ENCODE measurements at regions of chr1 and their contacts with region 1.

Region 1: GRCh38 chr1:224922404-224923164 is 6.9 kb upstream of the DNAH14 start:
- DNase-seq: no peak
- H3K4me3 ChIP-seq: no peak overlapping the region
- H3K27ac ChIP-seq: no peak overlapping the region
- H3K4me1 ChIP-seq: no peaks in the 10 kb centered on the region
- H3K27me3 ChIP-seq: no peaks in the 10 kb centered on the region
- CTCF ChIP-seq: peak in 3 of 4 experiments; percentile 57 to 73 (median 61)
- EP300 ChIP-seq: no peak
- POLR2A ChIP-seq: no peak

Region 2: DNA sequence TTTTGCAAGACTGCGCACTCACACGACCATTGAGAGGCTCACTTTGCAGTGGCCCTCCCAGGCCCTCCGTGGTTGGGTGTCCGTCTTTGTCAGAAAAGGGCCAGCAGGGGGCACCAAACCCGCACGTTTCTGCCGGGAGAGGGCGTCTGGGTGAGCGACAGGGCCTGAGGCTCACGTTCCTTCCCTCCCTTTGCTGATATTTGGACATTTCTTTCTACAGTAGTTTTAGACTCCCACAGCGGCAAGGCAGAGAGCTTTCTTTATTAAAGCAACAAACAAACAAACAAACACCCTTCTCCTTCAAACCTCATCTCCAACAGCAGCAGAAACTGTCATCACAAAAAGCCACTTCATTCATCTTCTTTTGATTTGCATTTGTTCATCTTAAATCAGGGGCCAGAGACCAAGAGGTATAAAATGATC is 408.8 kb before region 1 on chr1:
- intact Hi-C with region 1: loop called (anchors 2 kb)
- DNase-seq: peak; percentile 88
- H3K4me3 ChIP-seq: no peak overlapping the region
- H3K27ac ChIP-seq: no peak overlapping the region
- H3K4me1 ChIP-seq: no peaks in the 10 kb centered on the region
- H3K27me3 ChIP-seq: no peaks in the 10 kb centered on the region
- CTCF ChIP-seq: peak; percentile 64 to 93 (median 88)
- EP300 ChIP-seq: no peak
- POLR2A ChIP-seq: no peak

Region 3: DNA sequence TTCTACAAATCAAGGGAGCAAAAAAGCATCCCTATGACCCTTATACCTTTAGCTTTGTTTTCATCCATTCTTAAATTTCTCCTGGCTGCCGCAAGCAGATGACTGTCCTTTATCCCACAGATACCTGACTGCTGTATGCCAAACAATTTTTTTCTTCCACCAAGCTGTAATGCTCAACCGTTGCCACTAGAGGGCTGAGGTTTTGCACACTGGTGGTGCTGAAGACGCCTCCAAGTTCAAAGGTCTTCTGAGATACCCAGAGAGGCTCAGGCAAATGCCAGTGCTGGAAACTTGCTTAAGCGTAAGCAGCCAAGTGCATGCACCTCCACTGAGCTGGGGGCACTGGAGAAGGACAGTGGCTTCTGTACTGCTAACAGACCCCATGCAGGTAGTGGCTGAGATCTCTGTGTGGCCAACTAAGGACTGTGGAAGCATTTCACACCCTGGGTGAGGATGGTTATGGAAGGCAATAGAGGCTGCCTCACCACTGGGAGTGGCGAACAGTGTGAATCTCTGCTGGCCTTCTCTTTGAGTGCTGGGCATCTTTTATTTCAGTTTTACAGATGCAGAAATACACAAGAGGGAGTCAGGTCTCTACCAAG is 277.9 kb before region 1 on chr1:
- intact Hi-C with region 1: loop called (anchors 1 kb)
- DNase-seq: no peak
- H3K4me3 ChIP-seq: no peak overlapping the region
- H3K27ac ChIP-seq: no peak overlapping the region
- H3K4me1 ChIP-seq: no peaks in the 10 kb centered on the region
- H3K27me3 ChIP-seq: no peaks in the 10 kb centered on the region
- CTCF ChIP-seq: peak; percentile 10 to 86 (median 71)
- EP300 ChIP-seq: no peak
- POLR2A ChIP-seq: no peak

Region 4: DNA sequence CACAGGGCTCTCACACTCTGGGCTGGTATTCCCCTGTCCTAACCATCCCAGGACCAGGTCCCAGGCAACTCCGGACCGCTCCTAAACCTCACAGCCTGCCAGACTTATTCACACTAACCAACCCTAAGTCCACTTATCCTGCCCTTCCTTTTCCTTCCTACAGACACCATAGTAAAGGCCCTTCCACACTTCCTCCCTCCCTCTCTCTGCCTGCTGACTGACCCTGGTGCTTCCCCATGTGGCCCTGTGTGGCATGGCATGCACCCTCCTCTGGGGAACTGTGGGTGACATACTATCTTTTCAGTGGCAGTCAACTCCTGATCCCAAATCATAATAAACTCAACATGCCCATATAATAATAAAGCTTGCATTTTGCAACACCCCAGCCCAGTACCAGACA is 148.2 kb before region 1 on chr1:
- intact Hi-C with region 1: no loop called
- DNase-seq: no peak
- H3K4me3 ChIP-seq: no peak overlapping the region
- H3K27ac ChIP-seq: no peak overlapping the region
- H3K4me1 ChIP-seq: peaks cover 0 to 13% (median 5%) of the 10 kb centered on the region in 4 donors
- H3K27me3 ChIP-seq: no peaks in the 10 kb centered on the region
- CTCF ChIP-seq: no peak
- EP300 ChIP-seq: no peak
- POLR2A ChIP-seq: no peak

Measured in sigmoid colon (tissue), 7 donors.